ENCODE measurements at regions of chr3 and their contacts with region 1.

Region 1: DNA sequence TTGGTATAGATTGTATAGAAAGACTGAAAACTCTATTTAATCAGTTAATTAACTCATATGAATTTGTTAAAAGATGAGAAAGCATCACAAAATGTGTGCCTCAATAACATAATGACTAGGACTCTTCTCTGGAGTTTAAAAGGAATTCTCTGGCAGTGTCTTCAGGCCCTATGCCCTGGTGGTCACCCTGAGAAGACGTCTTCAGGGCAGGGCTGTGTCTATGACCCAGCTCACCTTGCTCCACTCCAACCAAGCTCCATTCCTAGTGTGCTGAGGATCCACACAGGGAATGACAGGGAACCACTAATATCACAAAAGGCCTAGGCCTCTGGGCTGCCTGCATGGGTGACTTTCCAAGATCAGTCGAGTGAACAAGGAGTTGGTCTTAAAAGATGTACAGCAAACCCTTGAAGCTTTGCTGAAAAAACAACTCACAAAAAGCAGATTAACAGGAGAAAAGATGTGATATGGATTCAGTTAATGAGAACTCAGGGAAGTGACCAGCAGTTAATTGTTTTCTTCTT is 156.6 kb downstream of the SNRK start:
- DNase-seq: no peak
- ATAC-seq: no peak
- H3K4me3 ChIP-seq: no peak overlapping the region
- H3K4me3 Mint-ChIP-seq: no peak overlapping the region
- H3K27ac ChIP-seq: no peak overlapping the region
- H3K27ac Mint-ChIP-seq: no peak overlapping the region
- H3K4me1 ChIP-seq: no peaks in the 10 kb centered on the region
- H3K4me1 Mint-ChIP-seq: no peaks in the 10 kb centered on the region
- H3K27me3 ChIP-seq: no peaks in the 10 kb centered on the region
- H3K27me3 Mint-ChIP-seq: no peaks in the 10 kb centered on the region
- CTCF ChIP-seq: no peak

Region 2: DNA sequence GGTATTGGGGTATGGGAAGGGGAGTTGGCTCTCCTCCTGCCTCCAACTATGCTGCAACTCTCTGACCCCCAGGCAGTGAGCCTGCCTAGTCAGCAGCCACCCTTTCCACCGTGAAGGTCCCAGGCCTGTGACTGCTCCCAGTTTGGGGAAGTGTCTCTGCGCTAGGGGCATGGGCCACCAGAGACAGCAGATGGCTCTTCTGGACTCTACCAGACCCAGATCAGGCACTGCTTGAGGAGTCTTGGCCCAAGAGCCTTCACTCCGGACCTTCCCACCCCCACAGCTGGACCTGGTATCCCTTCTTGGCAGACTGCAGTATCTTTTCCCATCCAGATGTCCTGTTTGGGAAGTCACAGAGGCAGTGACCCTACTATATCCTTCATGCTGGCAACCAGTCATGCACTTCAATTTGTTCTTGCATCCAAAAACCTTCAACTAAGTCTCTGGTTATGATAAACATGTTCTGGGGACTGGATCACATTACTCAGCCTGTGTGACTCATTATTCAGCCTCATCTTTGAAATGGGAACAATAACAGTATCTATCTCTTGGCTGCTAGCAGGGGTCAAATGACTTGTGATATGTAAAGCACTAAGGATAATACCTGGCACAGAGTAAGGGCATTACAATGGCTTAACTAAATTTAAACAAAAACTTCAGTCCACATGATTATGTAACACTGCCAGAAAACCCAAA is 399.7 kb before region 1 on chr3:
- CTCF ChIA-PET with region 1: no interaction called
- POLR2A ChIA-PET with region 1: no interaction called
- intact Hi-C with region 1: loop called (anchors 5 kb)
- DNase-seq: no peak
- ATAC-seq: no peak
- H3K4me3 ChIP-seq: no peak overlapping the region
- H3K4me3 Mint-ChIP-seq: no peak overlapping the region
- H3K27ac ChIP-seq: no peak overlapping the region
- H3K27ac Mint-ChIP-seq: no peak overlapping the region
- H3K4me1 ChIP-seq: no peaks in the 10 kb centered on the region
- H3K4me1 Mint-ChIP-seq: no peaks in the 10 kb centered on the region
- H3K27me3 ChIP-seq: peaks cover 0 to 3% (median 0%) of the 10 kb centered on the region in 4 experiments
- H3K27me3 Mint-ChIP-seq: peaks cover 15% of the 10 kb centered on the region
- CTCF ChIP-seq: no peak

Region 3: DNA sequence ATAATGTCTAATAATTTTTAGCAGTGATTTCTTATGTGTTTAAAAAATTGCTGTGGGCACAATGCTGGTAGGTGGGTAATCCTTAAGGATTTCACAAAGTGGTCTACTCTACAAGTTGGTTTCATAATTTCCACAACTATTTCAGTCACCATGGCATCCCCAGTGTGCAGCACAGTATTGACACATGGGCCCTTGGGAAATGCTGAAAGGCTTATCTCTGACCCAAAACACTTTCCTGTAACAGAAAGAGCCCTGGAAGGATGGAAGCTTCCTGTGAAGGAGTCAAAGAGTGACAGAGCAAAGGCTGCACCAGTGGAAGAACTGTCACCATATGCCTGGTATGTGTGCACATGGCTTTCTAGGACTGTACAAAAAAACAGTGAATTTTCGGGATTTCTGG is 25.2 kb after region 1 on chr3:
- CTCF ChIA-PET with region 1: no interaction called
- POLR2A ChIA-PET with region 1: no interaction called
- intact Hi-C with region 1: no loop called
- DNase-seq: no peak
- ATAC-seq: no peak
- H3K4me3 ChIP-seq: no peak overlapping the region
- H3K4me3 Mint-ChIP-seq: no peak overlapping the region
- H3K27ac ChIP-seq: no peak overlapping the region
- H3K27ac Mint-ChIP-seq: no peak overlapping the region
- H3K4me1 ChIP-seq: no peaks in the 10 kb centered on the region
- H3K4me1 Mint-ChIP-seq: no peaks in the 10 kb centered on the region
- H3K27me3 ChIP-seq: no peaks in the 10 kb centered on the region
- H3K27me3 Mint-ChIP-seq: peaks cover 8% of the 10 kb centered on the region
- CTCF ChIP-seq: no peak